ENCODE measurements at regions of chr17 and their contacts with region 1.

Region 1: DNA sequence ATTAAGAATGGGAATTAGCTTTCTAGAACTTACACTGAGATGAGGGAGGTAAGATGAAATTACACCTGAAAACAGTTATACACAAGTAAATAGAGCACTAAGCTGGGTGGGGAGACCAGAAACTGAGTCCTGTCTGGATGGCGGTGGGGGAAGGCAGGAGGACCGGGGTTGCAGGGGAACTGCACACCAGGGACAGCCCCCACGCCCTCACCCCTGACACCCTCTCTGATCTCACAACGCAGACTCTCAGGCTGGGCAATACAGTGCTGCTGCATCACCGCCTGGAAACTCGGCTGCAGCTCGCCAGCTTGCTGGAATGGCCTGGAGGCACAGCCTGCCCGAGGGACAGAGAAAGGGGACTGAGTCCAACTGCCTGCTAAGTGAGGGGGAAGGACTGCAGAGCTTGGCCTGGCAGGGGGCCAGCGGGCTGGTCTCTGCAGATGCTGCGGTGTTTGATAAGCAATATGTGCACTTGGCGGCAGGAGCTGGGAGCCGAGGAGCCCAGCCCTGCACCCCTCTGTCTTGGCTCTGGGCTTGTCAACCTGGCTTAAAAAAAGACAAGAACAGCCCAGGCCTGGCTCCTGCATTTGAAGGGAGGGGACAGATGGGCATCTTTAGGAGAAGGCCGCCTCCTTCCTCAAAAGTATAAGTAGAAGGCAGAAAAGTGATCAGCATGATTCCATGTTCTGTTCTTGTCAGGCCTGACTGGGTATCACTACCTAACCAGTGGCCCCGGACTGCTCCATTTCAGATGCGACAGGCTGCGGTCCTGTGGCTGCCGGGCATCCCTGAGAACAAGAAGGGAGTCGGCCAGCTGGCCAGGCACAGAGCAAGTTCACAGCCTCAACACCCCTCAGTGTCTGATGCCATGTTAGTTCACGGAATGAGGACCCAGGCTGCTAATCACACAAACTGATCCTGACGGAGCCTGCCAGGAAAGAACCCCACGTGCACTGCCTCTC is 30.2 kb downstream of the SPHK1 start:
- DNase-seq: peak; percentile 79 to 92
- H3K4me3 ChIP-seq: no peak overlapping the region
- H3K27ac ChIP-seq: peak overlapping the region in 1 of 5 donors; percentile 39
- H3K4me1 ChIP-seq: peaks cover 14 to 37% (median 26%) of the 10 kb centered on the region in 4 donors
- H3K27me3 ChIP-seq: no peaks in the 10 kb centered on the region
- CTCF ChIP-seq: no peak
- EP300 ChIP-seq: no peak
- POLR2A ChIP-seq: no peak

Region 2: DNA sequence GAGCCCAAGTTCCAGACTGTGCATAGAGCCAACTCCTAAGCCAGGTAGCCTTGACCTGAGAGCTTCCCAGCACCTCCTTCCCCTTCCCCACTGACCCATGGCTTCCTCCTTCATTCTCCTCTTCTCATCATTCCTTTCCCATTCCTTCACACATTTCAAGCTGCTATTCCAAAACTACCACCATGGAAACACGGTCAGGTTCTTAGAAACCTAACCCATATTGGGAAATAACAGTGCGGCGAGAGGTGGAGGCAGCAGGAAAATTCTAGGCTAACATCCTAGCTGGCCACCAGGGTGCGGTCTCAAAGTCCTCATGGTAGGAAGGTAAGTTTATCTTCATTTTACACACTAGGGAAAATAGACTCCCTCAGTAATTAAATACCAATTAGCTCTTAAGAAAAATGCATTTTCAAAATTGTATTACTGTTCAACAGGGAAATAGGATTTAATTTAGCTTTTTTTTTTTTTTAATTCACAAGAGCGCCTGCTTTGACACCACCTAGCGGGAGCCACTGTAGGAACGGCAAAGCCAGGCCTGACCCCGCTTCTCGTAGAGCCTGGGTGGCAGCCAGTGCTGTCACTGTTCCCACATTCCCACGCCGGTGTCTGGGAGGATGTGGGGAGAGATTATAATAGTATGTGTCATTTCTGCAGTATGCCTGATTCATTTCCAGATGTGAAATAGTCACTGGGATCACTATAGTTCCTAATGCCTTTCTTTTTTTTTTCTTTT is 44.2 kb before region 1 on chr17:
- intact Hi-C with region 1: no loop called
- DNase-seq: peak in 1 of 2 donors; percentile 47
- H3K4me3 ChIP-seq: no peak overlapping the region
- H3K27ac ChIP-seq: peak overlapping the region in 4 of 5 donors; percentile 25 to 50 (median 44)
- H3K4me1 ChIP-seq: peaks cover 0 to 11% (median 8%) of the 10 kb centered on the region in 4 donors
- H3K27me3 ChIP-seq: no peaks in the 10 kb centered on the region
- CTCF ChIP-seq: peak in 5 of 7 experiments; percentile 25 to 39 (median 28)
- EP300 ChIP-seq: no peak
- POLR2A ChIP-seq: no peak

Region 3: GRCh38 chr17:76461765-76462555 is 47.3 kb after region 1 on chr17:
- intact Hi-C with region 1: loop called (anchors 5 kb)
- DNase-seq: no peak
- H3K4me3 ChIP-seq: no peak overlapping the region
- H3K27ac ChIP-seq: no peak overlapping the region
- H3K4me1 ChIP-seq: peaks cover 0 to 11% (median 2%) of the 10 kb centered on the region in 4 donors
- H3K27me3 ChIP-seq: no peaks in the 10 kb centered on the region
- CTCF ChIP-seq: no peak
- EP300 ChIP-seq: no peak
- POLR2A ChIP-seq: no peak

Region 4: GRCh38 chr17:76585818-76586593 is 171.4 kb after region 1 on chr17 and contains the start of gene ST6GALNAC2:
- intact Hi-C with region 1: no loop called
- DNase-seq: peak; percentile 84 to 93
- H3K4me3 ChIP-seq: peak within 1 kb of the TSS; percentile 50 to 82 (median 68)
- H3K27ac ChIP-seq: peak within 1 kb of the TSS; percentile 74 to 84 (median 78)
- H3K4me1 ChIP-seq: peaks cover 13 to 32% (median 28%) of the 10 kb centered on the region in 4 donors
- H3K27me3 ChIP-seq: peaks cover 0 to 55% (median 22%) of the 10 kb centered on the region in 3 donors
- CTCF ChIP-seq: peak in 4 of 7 experiments; percentile 20 to 58 (median 54)
- EP300 ChIP-seq: no peak
- POLR2A ChIP-seq: no peak
- total RNA-seq, gene ST6GALNAC2: 1.2 to 17.8 (median 3.6) TPM